Pancreas (tissue), 10 donors: ENCODE measurements at regions of chr10 and their contacts with region 1.

Region 1: GRCh38 chr10:12181065-12181775 is 14.5 kb downstream of the NUDT5 start:
- DNase-seq: no peak
- ATAC-seq: peak in 3 of 4 donors; percentile 11 to 61 (median 51)
- H3K4me3 ChIP-seq: no peak overlapping the region
- H3K27ac ChIP-seq: no peak overlapping the region
- H3K4me1 ChIP-seq: no peaks in the 10 kb centered on the region
- H3K27me3 ChIP-seq: no peaks in the 10 kb centered on the region
- CTCF ChIP-seq: no peak

Region 2: GRCh38 chr10:11793762-11794479 is 387.3 kb before region 1 on chr10:
- intact Hi-C with region 1: loop called in 1 of 3 experiments (anchors 10 kb)
- DNase-seq: no peak
- ATAC-seq: no peak
- H3K4me3 ChIP-seq: no peak overlapping the region
- H3K27ac ChIP-seq: no peak overlapping the region
- H3K4me1 ChIP-seq: no peaks in the 10 kb centered on the region
- H3K27me3 ChIP-seq: no peaks in the 10 kb centered on the region
- CTCF ChIP-seq: no peak

Region 3: GRCh38 chr10:12466704-12467305 is 285.6 kb after region 1 on chr10:
- intact Hi-C with region 1: no loop called
- DNase-seq: no peak
- ATAC-seq: no peak
- H3K4me3 ChIP-seq: no peak overlapping the region
- H3K27ac ChIP-seq: no peak overlapping the region
- H3K4me1 ChIP-seq: peaks cover 10 to 22% (median 12%) of the 10 kb centered on the region in 3 donors
- H3K27me3 ChIP-seq: no peaks in the 10 kb centered on the region
- CTCF ChIP-seq: no peak